Lower lobe of right lung (tissue), 2 donors: ENCODE measurements at regions of chr20 and their contacts with region 1.

Region 1: GRCh38 chr20:54199721-54200176 is 8.1 kb upstream of the PFDN4 start:
- DNase-seq: peak; percentile 72
- ATAC-seq: peak; percentile 80 to 81
- H3K4me3 ChIP-seq: no peak overlapping the region
- H3K27ac ChIP-seq: no peak overlapping the region
- H3K4me1 ChIP-seq: no peaks in the 10 kb centered on the region
- H3K27me3 ChIP-seq: no peaks in the 10 kb centered on the region
- CTCF ChIP-seq: peak; percentile 93

Region 2: DNA sequence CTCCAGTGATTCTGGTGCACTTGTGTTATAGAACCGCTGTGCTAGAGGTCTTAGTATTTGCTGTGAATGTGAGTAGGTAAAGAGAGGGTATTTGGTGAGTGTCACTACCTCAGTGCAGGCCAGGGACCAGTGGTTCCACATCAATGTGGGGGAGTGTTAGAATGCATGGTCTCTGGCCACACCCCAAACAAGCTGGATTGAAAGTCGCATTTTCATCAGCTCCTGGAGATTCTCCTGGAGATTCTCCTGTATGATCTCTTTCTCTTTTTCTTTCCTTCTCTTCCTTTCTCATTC is 102.6 kb before region 1 on chr20:
- intact Hi-C with region 1: loop called (anchors 5 kb)
- DNase-seq: no peak
- ATAC-seq: peak in 1 of 2 donors; percentile 12
- H3K4me3 ChIP-seq: no peak overlapping the region
- H3K27ac ChIP-seq: no peak overlapping the region
- H3K4me1 ChIP-seq: no peaks in the 10 kb centered on the region
- H3K27me3 ChIP-seq: peaks cover 4% of the 10 kb centered on the region
- CTCF ChIP-seq: no peak